Mammary epithelial cell (primary cell): ENCODE measurements at regions of chr11 and their contacts with region 1.

Region 1: DNA sequence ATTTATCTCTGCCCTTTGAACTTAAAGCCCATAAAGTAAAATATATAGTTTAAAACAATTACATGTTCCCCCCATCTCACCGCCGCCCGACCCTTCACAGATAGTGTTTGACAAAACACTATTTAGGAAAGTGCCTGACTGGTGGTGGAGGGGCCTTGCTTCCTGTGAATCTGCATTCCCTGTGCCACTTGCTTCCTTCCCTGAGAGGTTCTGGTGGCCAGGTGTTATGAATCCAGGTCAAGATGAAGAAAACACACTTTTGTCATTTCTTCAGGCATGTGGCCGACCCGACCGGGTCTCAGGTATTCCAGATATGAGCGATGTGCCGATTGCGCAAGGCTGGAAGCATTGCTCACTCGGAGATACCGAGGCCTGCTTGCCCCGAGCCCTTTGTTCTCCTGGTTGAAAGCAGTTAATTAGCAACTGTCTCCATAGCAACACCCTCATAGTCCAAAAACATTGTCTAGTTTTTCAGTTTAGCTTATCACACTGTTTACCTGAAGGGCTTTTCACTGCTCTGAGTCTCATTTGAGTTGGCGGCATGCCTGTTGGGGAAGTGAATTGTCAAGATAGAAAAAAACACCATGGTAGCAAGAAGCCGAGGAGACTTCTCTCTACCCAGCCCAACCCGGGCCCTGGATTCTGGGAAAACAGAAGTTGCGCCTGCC is 128.3 kb downstream of the TEAD1 start:
- DNase-seq: peak; percentile 99
- H3K4me3 ChIP-seq: no peak overlapping the region
- H3K27ac ChIP-seq: peak overlapping the region; percentile 96
- H3K4me1 ChIP-seq: peaks cover 84% of the 10 kb centered on the region
- H3K27me3 ChIP-seq: no peaks in the 10 kb centered on the region
- CTCF ChIP-seq: no peak

Region 2: GRCh38 chr11:12417728-12418611 is 384.6 kb before region 1 on chr11:
- CTCF ChIA-PET with region 1: no interaction called
- dilution Hi-C with region 1: loop called (anchors 5 kb)
- in situ Hi-C with region 1: no loop called
- intact Hi-C with region 1: loop called (anchors 5 kb)
- DNase-seq: peak; percentile 32
- H3K4me3 ChIP-seq: no peak overlapping the region
- H3K27ac ChIP-seq: no peak overlapping the region
- H3K4me1 ChIP-seq: peaks cover 22% of the 10 kb centered on the region
- H3K27me3 ChIP-seq: no peaks in the 10 kb centered on the region
- CTCF ChIP-seq: no peak

Region 3: GRCh38 chr11:12818333-12819015 is 15.9 kb after region 1 on chr11:
- CTCF ChIA-PET with region 1: no interaction called
- dilution Hi-C with region 1: no loop called
- in situ Hi-C with region 1: no loop called
- intact Hi-C with region 1: no loop called
- DNase-seq: peak; percentile 81
- H3K4me3 ChIP-seq: no peak overlapping the region
- H3K27ac ChIP-seq: peak overlapping the region; percentile 54
- H3K4me1 ChIP-seq: peaks cover 46% of the 10 kb centered on the region
- H3K27me3 ChIP-seq: no peaks in the 10 kb centered on the region
- CTCF ChIP-seq: no peak

Region 4: DNA sequence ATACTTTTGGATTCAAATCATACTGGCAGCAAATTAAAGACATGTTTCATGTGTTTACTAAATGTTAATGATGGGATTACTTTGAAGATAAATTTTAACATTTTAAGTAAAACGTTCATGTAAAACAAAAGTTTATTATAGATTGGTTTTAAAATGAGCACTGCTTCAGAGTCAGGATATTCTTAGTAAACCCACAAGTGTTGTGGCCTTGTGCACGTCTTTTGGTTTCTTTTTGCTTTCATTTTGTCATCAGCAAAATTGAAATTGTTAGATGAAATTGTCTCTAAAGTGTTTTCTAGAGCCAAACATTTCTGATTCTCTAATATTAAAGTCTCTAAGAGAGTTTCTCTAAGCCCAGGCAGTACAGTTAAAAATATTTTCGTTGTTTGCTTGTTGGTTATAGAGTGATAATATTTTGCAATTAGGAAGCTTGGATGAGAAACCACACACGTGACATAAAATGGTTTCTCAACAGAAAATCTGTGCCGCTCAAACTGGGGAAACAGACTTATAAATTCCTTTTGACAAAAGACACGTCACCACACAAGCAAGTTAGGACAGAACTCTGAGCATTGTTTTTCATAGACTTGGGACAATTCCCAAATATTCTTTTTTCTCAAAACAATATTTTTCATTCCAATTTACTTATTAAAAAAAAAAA is 36.0 kb after region 1 on chr11:
- CTCF ChIA-PET with region 1: no interaction called
- dilution Hi-C with region 1: no loop called
- in situ Hi-C with region 1: no loop called
- intact Hi-C with region 1: loop called (anchors 1 kb)
- DNase-seq: peak; percentile 85
- H3K4me3 ChIP-seq: peak overlapping the region; percentile 18 to 53 (median 51)
- H3K27ac ChIP-seq: peak overlapping the region; percentile 94
- H3K4me1 ChIP-seq: peaks cover 42% of the 10 kb centered on the region
- H3K27me3 ChIP-seq: no peaks in the 10 kb centered on the region
- CTCF ChIP-seq: no peak

Region 5: GRCh38 chr11:12862696-12863469 is 60.3 kb after region 1 on chr11:
- CTCF ChIA-PET with region 1: no interaction called
- dilution Hi-C with region 1: loop called (anchors 5 kb)
- in situ Hi-C with region 1: no loop called
- intact Hi-C with region 1: no loop called
- DNase-seq: peak; percentile 24
- H3K4me3 ChIP-seq: no peak overlapping the region
- H3K27ac ChIP-seq: no peak overlapping the region
- H3K4me1 ChIP-seq: peaks cover 14% of the 10 kb centered on the region
- H3K27me3 ChIP-seq: no peaks in the 10 kb centered on the region
- CTCF ChIP-seq: no peak